ENCODE measurements at regions of chr18 and their contacts with region 1.

Region 1: GRCh38 chr18:63518178-63519012 is 23.8 kb upstream of the SERPINB12 start:
- DNase-seq: peak; percentile 72
- ATAC-seq: peak; percentile 86
- H3K4me3 Mint-ChIP-seq: no peak overlapping the region
- H3K27ac Mint-ChIP-seq: no peak overlapping the region
- H3K4me1 Mint-ChIP-seq: no peaks in the 10 kb centered on the region
- H3K27me3 Mint-ChIP-seq: peaks cover 7% of the 10 kb centered on the region
- CTCF ChIP-seq: peak; percentile 75

Region 2: GRCh38 chr18:63180971-63181376 is 337.4 kb before region 1 on chr18:
- CTCF ChIA-PET with region 1: no interaction called
- POLR2A ChIA-PET with region 1: no interaction called
- intact Hi-C with region 1: no loop called
- DNase-seq: no peak
- ATAC-seq: peak; percentile 26
- H3K4me3 Mint-ChIP-seq: no peak overlapping the region
- H3K27ac Mint-ChIP-seq: peak overlapping the region; percentile 13
- H3K4me1 Mint-ChIP-seq: peaks cover 71% of the 10 kb centered on the region
- H3K27me3 Mint-ChIP-seq: no peaks in the 10 kb centered on the region
- CTCF ChIP-seq: no peak

Region 3: DNA sequence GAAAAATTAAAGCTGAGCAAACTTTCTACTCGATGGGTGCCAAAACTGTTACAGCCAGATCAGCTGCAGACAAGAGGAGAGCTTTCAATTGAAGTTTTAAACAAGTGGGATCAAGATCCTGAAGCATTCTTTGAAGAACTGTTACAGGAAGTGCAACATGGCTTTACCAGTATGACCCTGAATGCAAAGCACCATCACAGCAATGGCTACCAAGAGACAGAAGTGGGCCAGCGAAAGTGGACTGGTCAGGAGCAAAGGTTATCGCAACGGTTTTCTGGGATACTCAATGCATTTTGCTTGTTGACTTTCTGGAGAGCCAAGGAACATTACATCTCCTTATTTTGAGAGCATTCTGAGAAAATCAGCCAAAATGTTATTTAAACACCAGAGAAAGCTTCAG is 50.7 kb before region 1 on chr18:
- CTCF ChIA-PET with region 1: no interaction called
- POLR2A ChIA-PET with region 1: no interaction called
- intact Hi-C with region 1: no loop called
- DNase-seq: no peak
- ATAC-seq: no peak
- H3K4me3 Mint-ChIP-seq: no peak overlapping the region
- H3K27ac Mint-ChIP-seq: no peak overlapping the region
- H3K4me1 Mint-ChIP-seq: no peaks in the 10 kb centered on the region
- H3K27me3 Mint-ChIP-seq: peaks cover 5% of the 10 kb centered on the region
- CTCF ChIP-seq: no peak

Region 4: GRCh38 chr18:63528863-63529492 is 10.6 kb after region 1 on chr18:
- CTCF ChIA-PET with region 1: interaction called, 17 read pairs
- POLR2A ChIA-PET with region 1: no interaction called
- intact Hi-C with region 1: no loop called
- DNase-seq: no peak
- ATAC-seq: no peak
- H3K4me3 Mint-ChIP-seq: no peak overlapping the region
- H3K27ac Mint-ChIP-seq: no peak overlapping the region
- H3K4me1 Mint-ChIP-seq: no peaks in the 10 kb centered on the region
- H3K27me3 Mint-ChIP-seq: peaks cover 7% of the 10 kb centered on the region
- CTCF ChIP-seq: no peak

Region 5: DNA sequence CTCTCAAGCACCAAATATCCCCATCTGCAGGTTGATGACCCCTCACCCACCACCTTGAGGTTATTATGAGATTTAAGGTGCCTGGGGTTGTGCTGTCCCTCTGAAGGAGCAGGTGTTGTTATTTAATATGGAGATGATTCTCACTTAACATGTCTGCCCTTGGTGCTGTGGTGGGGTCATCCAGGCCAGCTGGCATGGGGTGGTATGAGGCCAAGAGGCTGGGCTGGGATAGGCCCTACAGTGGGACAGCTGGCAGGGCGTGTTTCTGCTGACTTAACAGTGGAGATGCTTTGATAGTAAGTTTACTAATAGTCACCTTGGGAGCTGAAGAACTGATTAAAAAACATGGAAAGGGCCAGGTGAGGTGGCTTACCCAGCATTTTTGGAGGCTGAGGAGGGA is 46.2 kb after region 1 on chr18:
- CTCF ChIA-PET with region 1: interaction called, 14 read pairs
- POLR2A ChIA-PET with region 1: interaction called, 3 read pairs
- intact Hi-C with region 1: no loop called
- DNase-seq: no peak
- ATAC-seq: no peak
- H3K4me3 Mint-ChIP-seq: no peak overlapping the region
- H3K27ac Mint-ChIP-seq: no peak overlapping the region
- H3K4me1 Mint-ChIP-seq: no peaks in the 10 kb centered on the region
- H3K27me3 Mint-ChIP-seq: peaks cover 6% of the 10 kb centered on the region
- CTCF ChIP-seq: no peak

Region 6: DNA sequence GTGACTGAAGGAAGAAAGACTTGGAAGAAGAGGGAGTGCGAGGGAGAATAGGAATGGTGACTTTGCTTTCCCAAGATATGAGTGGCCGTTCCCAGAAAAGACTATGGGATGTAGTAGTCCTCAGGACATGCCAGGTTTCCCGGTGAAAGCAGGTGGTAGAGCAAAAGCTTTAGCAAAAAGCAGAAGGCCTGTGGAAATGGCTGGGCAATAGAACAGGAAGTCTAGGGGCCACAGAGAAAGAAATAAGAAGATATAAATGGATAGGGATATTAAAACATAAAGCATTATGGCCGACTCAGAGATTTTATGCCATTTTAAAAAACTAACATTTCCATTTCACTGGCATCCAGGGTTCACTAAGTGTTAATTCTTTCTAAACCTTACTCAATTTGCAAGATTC is 67.6 kb after region 1 on chr18:
- CTCF ChIA-PET with region 1: interaction called, 125 read pairs
- POLR2A ChIA-PET with region 1: no interaction called
- intact Hi-C with region 1: no loop called
- DNase-seq: no peak
- ATAC-seq: no peak
- H3K4me3 Mint-ChIP-seq: no peak overlapping the region
- H3K27ac Mint-ChIP-seq: no peak overlapping the region
- H3K4me1 Mint-ChIP-seq: no peaks in the 10 kb centered on the region
- H3K27me3 Mint-ChIP-seq: peaks cover 2% of the 10 kb centered on the region
- CTCF ChIP-seq: no peak

Region 7: DNA sequence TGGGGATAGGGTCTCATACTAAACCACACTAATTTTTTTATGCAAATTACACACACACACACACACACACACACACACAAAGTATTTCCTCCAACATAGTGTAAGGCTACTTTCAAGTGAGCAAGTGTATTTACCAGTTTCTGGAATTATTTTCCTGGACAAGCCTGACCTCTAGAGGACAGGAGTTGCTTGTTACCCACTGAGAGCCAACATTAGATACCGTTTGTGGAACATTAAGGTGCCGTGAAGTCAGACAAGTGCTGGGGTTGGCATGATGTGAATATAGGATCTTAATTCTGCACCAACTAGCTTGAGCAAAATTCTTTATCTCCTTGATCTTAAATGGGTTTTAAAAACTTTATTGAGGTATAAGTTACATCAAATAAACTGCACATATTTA is 329.8 kb after region 1 on chr18:
- CTCF ChIA-PET with region 1: interaction called, 19 read pairs
- POLR2A ChIA-PET with region 1: no interaction called
- intact Hi-C with region 1: loop called (anchors 5 kb)
- DNase-seq: peak; percentile 5
- ATAC-seq: no peak
- H3K4me3 Mint-ChIP-seq: no peak overlapping the region
- H3K27ac Mint-ChIP-seq: no peak overlapping the region
- H3K4me1 Mint-ChIP-seq: no peaks in the 10 kb centered on the region
- H3K27me3 Mint-ChIP-seq: peaks cover 8% of the 10 kb centered on the region
- CTCF ChIP-seq: peak; percentile 15

Region 8: GRCh38 chr18:63979409-63979920 is 461.1 kb after region 1 on chr18:
- CTCF ChIA-PET with region 1: interaction called, 3 read pairs
- POLR2A ChIA-PET with region 1: no interaction called
- intact Hi-C with region 1: loop called (anchors 1 kb)
- DNase-seq: peak; percentile 59
- ATAC-seq: peak; percentile 81
- H3K4me3 Mint-ChIP-seq: no peak overlapping the region
- H3K27ac Mint-ChIP-seq: no peak overlapping the region
- H3K4me1 Mint-ChIP-seq: peaks cover 12% of the 10 kb centered on the region
- H3K27me3 Mint-ChIP-seq: no peaks in the 10 kb centered on the region
- CTCF ChIP-seq: peak; percentile 80

Measured in activated CD8-positive, alpha-beta T cell treated with anti-CD3 and anti-CD28 coated beads for 36 hours (primary cell).